ENCODE measurements at regions of chr9 and their contacts with region 1.

Region 1: DNA sequence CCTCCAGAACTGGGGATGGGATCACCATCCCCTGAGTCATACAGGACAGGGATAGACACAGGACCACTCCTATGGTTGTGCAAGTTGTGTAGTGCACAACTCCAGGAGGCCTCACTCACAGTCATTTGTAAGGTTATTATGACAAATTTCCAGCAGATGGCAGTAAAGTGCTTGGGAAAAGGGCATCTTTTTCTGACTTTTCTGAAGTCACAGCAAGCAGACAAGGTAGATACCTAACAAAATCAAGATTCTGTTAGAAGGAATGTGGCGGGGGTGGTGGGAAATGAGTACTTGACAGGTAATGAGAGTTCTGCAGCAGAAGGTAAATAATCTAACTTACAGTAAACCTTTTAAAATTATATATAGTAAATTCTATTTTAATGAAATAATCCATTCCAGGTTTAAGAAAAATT is 16.7 kb upstream of the KIF27 start:
- DNase-seq: no peak
- ATAC-seq: peak in 3 of 4 donors; percentile 58 to 74 (median 63)
- H3K4me3 ChIP-seq: no peak overlapping the region
- H3K27ac ChIP-seq: no peak overlapping the region
- H3K4me1 ChIP-seq: peaks cover 0 to 38% (median 5%) of the 10 kb centered on the region in 12 donors
- H3K27me3 ChIP-seq: no peaks in the 10 kb centered on the region
- CTCF ChIP-seq: peak; percentile 51 to 78 (median 71)
- POLR2A ChIP-seq: no peak

Region 2: GRCh38 chr9:83701769-83702168 is 236.1 kb before region 1 on chr9:
- intact Hi-C with region 1: no loop called
- DNase-seq: no peak
- ATAC-seq: peak in 2 of 4 donors; percentile 27 to 49
- H3K4me3 ChIP-seq: peak overlapping the region in 1 of 12 donors; percentile 1
- H3K27ac ChIP-seq: peak overlapping the region in 6 of 12 donors; percentile 2 to 40 (median 16)
- H3K4me1 ChIP-seq: peaks cover 6 to 89% (median 58%) of the 10 kb centered on the region in 12 donors
- H3K27me3 ChIP-seq: no peaks in the 10 kb centered on the region
- CTCF ChIP-seq: no peak
- POLR2A ChIP-seq: no peak

Region 3: GRCh38 chr9:83733739-83734138 is 204.2 kb before region 1 on chr9:
- intact Hi-C with region 1: no loop called
- DNase-seq: no peak
- ATAC-seq: no peak
- H3K4me3 ChIP-seq: no peak overlapping the region
- H3K27ac ChIP-seq: no peak overlapping the region
- H3K4me1 ChIP-seq: no peaks in the 10 kb centered on the region
- H3K27me3 ChIP-seq: no peaks in the 10 kb centered on the region
- CTCF ChIP-seq: no peak
- POLR2A ChIP-seq: no peak

Region 4: GRCh38 chr9:83794051-83794450 is 143.9 kb before region 1 on chr9:
- intact Hi-C with region 1: no loop called
- DNase-seq: no peak
- ATAC-seq: no peak
- H3K4me3 ChIP-seq: no peak overlapping the region
- H3K27ac ChIP-seq: no peak overlapping the region
- H3K4me1 ChIP-seq: no peaks in the 10 kb centered on the region
- H3K27me3 ChIP-seq: no peaks in the 10 kb centered on the region
- CTCF ChIP-seq: no peak
- POLR2A ChIP-seq: no peak

Region 5: GRCh38 chr9:84111726-84112125 is 173.8 kb after region 1 on chr9:
- intact Hi-C with region 1: no loop called
- DNase-seq: no peak
- ATAC-seq: no peak
- H3K4me3 ChIP-seq: no peak overlapping the region
- H3K27ac ChIP-seq: no peak overlapping the region
- H3K4me1 ChIP-seq: no peaks in the 10 kb centered on the region
- H3K27me3 ChIP-seq: no peaks in the 10 kb centered on the region
- CTCF ChIP-seq: no peak
- POLR2A ChIP-seq: no peak

Region 6: GRCh38 chr9:84177407-84177806 is 239.5 kb after region 1 on chr9:
- intact Hi-C with region 1: loop called in 4 of 10 experiments (anchors 2 to 5 kb)
- DNase-seq: no peak
- ATAC-seq: no peak
- H3K4me3 ChIP-seq: no peak overlapping the region
- H3K27ac ChIP-seq: no peak overlapping the region
- H3K4me1 ChIP-seq: peaks cover 0 to 20% (median 9%) of the 10 kb centered on the region in 12 donors
- H3K27me3 ChIP-seq: no peaks in the 10 kb centered on the region
- CTCF ChIP-seq: no peak
- POLR2A ChIP-seq: no peak

Region 7: GRCh38 chr9:84315278-84315877 is 377.5 kb after region 1 on chr9:
- intact Hi-C with region 1: loop called (anchors 1 to 5 kb)
- DNase-seq: peak in 4 of 5 donors; percentile 34 to 48 (median 38)
- ATAC-seq: peak; percentile 30 to 66 (median 57)
- H3K4me3 ChIP-seq: no peak overlapping the region
- H3K27ac ChIP-seq: no peak overlapping the region
- H3K4me1 ChIP-seq: peaks cover 0 to 7% (median 0%) of the 10 kb centered on the region in 12 donors
- H3K27me3 ChIP-seq: no peaks in the 10 kb centered on the region
- CTCF ChIP-seq: peak; percentile 67 to 85 (median 76)
- POLR2A ChIP-seq: no peak